CD8-positive, alpha-beta T cell (primary cell): ENCODE measurements at regions of chr1 and their contacts with region 1.

Region 1: DNA sequence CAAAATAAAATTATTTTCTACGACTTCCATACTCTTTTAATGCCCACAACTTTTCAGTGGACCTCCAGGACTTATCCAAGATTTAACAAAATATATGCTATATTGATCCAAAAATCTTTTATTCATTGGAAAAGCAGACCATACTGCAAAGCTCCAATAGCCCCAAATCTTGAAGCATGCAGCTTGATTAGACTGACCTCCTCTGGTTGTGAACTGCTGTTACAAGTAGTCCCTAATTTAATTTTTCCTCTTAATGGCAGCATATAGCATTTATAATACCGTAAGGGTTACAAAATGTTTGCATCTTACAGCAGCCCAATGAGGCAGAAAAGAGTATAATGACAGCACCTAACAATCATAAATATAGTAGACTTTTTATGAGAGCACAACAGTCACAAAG is 49.8 kb downstream of the TPR start:
- DNase-seq: peak in 2 of 9 experiments; percentile 22 to 40
- ATAC-seq: peak; percentile 62
- H3K4me3 ChIP-seq: no peak overlapping the region
- H3K4me3 Mint-ChIP-seq: no peak overlapping the region
- H3K27ac ChIP-seq: no peak overlapping the region
- H3K27ac Mint-ChIP-seq: no peak overlapping the region
- H3K4me1 ChIP-seq: no peaks in the 10 kb centered on the region
- H3K4me1 Mint-ChIP-seq: peaks cover 18% of the 10 kb centered on the region
- H3K27me3 ChIP-seq: no peaks in the 10 kb centered on the region
- H3K27me3 Mint-ChIP-seq: no peaks in the 10 kb centered on the region
- CTCF ChIP-seq: peak; percentile 60

Region 2: DNA sequence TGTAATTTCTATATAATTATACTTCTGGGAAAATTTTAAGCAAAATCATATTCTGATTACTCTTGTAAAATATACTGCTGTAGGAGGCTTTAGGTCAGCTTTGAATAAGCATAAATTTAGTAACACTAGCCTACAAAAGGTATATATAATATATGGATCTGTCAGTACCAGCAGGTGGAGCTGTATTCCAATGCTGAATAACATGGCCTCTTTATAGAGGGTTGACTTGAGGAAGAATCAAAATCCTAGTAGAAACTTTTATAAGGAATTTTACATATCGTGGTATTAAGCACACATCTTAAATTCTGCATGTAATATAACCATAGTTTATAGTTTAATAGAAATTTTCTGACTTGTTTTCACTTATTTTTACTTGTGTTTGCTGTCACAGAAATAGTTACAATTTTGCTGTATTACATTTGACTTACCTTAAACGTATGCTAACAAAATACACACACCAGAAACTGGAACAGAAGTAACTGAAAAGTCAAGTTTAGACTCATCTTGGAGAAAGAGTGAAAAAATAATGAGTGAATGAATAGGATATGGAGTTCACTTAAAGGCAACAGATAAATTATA is 511.7 kb before region 1 on chr1:
- CTCF ChIA-PET with region 1: no interaction called
- POLR2A ChIA-PET with region 1: no interaction called
- intact Hi-C with region 1: loop called in 1 of 2 experiments (anchors 10 kb)
- DNase-seq: peak in 2 of 9 experiments; percentile 3 to 24
- ATAC-seq: no peak
- H3K4me3 ChIP-seq: no peak overlapping the region
- H3K4me3 Mint-ChIP-seq: no peak overlapping the region
- H3K27ac ChIP-seq: no peak overlapping the region
- H3K27ac Mint-ChIP-seq: no peak overlapping the region
- H3K4me1 ChIP-seq: no peaks in the 10 kb centered on the region
- H3K4me1 Mint-ChIP-seq: no peaks in the 10 kb centered on the region
- H3K27me3 ChIP-seq: no peaks in the 10 kb centered on the region
- H3K27me3 Mint-ChIP-seq: peaks cover 3% of the 10 kb centered on the region
- CTCF ChIP-seq: no peak

Region 3: DNA sequence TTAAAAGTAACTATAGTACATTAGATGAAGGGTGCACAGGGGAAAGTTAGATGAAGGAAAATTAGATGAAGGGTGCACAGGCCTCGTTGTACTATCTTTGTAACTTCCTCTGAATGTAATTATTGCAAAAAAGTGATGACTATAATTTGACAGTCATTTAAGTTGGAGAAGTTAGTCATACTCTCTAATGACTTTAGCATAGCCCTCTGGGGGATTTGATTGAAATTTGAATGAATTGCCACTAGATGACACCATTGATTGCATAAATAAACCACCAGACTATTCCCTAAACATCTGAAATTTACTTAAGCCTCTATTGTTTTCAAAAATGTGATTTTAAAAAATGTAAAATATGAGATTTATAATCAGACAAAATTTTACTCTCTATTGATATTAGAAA is 52.8 kb before region 1 on chr1:
- CTCF ChIA-PET with region 1: interaction called, 3 read pairs
- POLR2A ChIA-PET with region 1: no interaction called
- intact Hi-C with region 1: loop called (anchors 1 kb)
- DNase-seq: peak in 2 of 9 experiments; percentile 11 to 27
- ATAC-seq: peak; percentile 38
- H3K4me3 ChIP-seq: no peak overlapping the region
- H3K4me3 Mint-ChIP-seq: no peak overlapping the region
- H3K27ac ChIP-seq: no peak overlapping the region
- H3K27ac Mint-ChIP-seq: no peak overlapping the region
- H3K4me1 ChIP-seq: no peaks in the 10 kb centered on the region
- H3K4me1 Mint-ChIP-seq: peaks cover 2% of the 10 kb centered on the region
- H3K27me3 ChIP-seq: no peaks in the 10 kb centered on the region
- H3K27me3 Mint-ChIP-seq: peaks cover 6% of the 10 kb centered on the region
- CTCF ChIP-seq: peak; percentile 45

Region 4: GRCh38 chr1:186304982-186305949 is 20.0 kb before region 1 on chr1:
- CTCF ChIA-PET with region 1: interaction called, 4 read pairs
- POLR2A ChIA-PET with region 1: interaction called, 4 read pairs
- intact Hi-C with region 1: loop called in 1 of 2 experiments (anchors 2 kb)
- DNase-seq: peak in 2 of 9 experiments; percentile 45 to 60
- ATAC-seq: peak; percentile 37
- H3K4me3 ChIP-seq: no peak overlapping the region
- H3K4me3 Mint-ChIP-seq: no peak overlapping the region
- H3K27ac ChIP-seq: peak overlapping the region in 1 of 2 experiments; percentile 10
- H3K27ac Mint-ChIP-seq: peak overlapping the region; percentile 93
- H3K4me1 ChIP-seq: peaks cover 50% of the 10 kb centered on the region
- H3K4me1 Mint-ChIP-seq: peaks cover 49% of the 10 kb centered on the region
- H3K27me3 ChIP-seq: no peaks in the 10 kb centered on the region
- H3K27me3 Mint-ChIP-seq: no peaks in the 10 kb centered on the region
- CTCF ChIP-seq: peak; percentile 74

Region 5: DNA sequence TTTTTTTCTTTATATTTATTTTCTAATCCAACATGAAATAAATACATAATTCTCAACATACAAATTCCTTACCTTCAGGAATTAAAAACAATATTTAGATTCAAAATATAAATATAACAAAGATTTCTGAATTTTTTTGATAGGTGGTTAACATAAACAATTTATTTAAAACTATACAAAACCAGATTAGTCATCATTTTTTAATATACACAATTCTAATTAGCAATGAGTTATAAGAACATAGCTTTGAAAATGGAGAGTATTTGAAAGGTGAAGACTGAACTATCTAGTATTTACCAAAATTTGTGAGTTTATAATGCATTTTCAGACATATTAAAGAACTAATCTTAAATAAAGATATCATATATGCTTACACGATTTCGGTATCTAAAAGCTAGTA is 12.3 kb after region 1 on chr1:
- CTCF ChIA-PET with region 1: interaction called, 9 read pairs
- POLR2A ChIA-PET with region 1: no interaction called
- intact Hi-C with region 1: loop called in 1 of 2 experiments (anchors 2 kb)
- DNase-seq: no peak
- ATAC-seq: no peak
- H3K4me3 ChIP-seq: no peak overlapping the region
- H3K4me3 Mint-ChIP-seq: no peak overlapping the region
- H3K27ac ChIP-seq: no peak overlapping the region
- H3K27ac Mint-ChIP-seq: no peak overlapping the region
- H3K4me1 ChIP-seq: no peaks in the 10 kb centered on the region
- H3K4me1 Mint-ChIP-seq: no peaks in the 10 kb centered on the region
- H3K27me3 ChIP-seq: no peaks in the 10 kb centered on the region
- H3K27me3 Mint-ChIP-seq: no peaks in the 10 kb centered on the region
- CTCF ChIP-seq: no peak

Region 6: GRCh38 chr1:186363891-186364290 is 38.7 kb after region 1 on chr1:
- CTCF ChIA-PET with region 1: no interaction called
- POLR2A ChIA-PET with region 1: no interaction called
- intact Hi-C with region 1: loop called (anchors 5 kb)
- DNase-seq: no peak
- ATAC-seq: no peak
- H3K4me3 ChIP-seq: no peak overlapping the region
- H3K4me3 Mint-ChIP-seq: no peak overlapping the region
- H3K27ac ChIP-seq: no peak overlapping the region
- H3K27ac Mint-ChIP-seq: no peak overlapping the region
- H3K4me1 ChIP-seq: no peaks in the 10 kb centered on the region
- H3K4me1 Mint-ChIP-seq: peaks cover 13% of the 10 kb centered on the region
- H3K27me3 ChIP-seq: no peaks in the 10 kb centered on the region
- H3K27me3 Mint-ChIP-seq: no peaks in the 10 kb centered on the region
- CTCF ChIP-seq: no peak